ENCODE measurements at regions of chr20 and their contacts with region 1.

Region 1: GRCh38 chr20:64062596-64063388 is at the start of gene TCEA2:
- DNase-seq: peak; percentile 97
- H3K4me3 ChIP-seq: peak within 1 kb of the TSS; percentile 67 to 88
- H3K27ac ChIP-seq: peak within 1 kb of the TSS; percentile 77 to 83
- H3K4me1 ChIP-seq: peaks cover 16% of the 10 kb centered on the region
- H3K27me3 ChIP-seq: no peaks in the 10 kb centered on the region
- CTCF ChIP-seq: peak in 2 of 4 experiments; percentile 14 to 22
- POLR2A ChIP-seq: peak; percentile 81
- total RNA-seq, gene TCEA2: 45.0 to 69.5 TPM

Region 2: GRCh38 chr20:63894358-63895201 is 168.2 kb before region 1 on chr20 and contains the start of gene DNAJC5:
- intact Hi-C with region 1: loop called (anchors 10 kb)
- DNase-seq: peak; percentile 94
- H3K4me3 ChIP-seq: peak within 1 kb of the TSS; percentile 46 to 55
- H3K27ac ChIP-seq: peak within 1 kb of the TSS; percentile 77 to 82
- H3K4me1 ChIP-seq: peaks cover 17% of the 10 kb centered on the region
- H3K27me3 ChIP-seq: no peaks in the 10 kb centered on the region
- CTCF ChIP-seq: peak in 1 of 4 experiments; percentile 20
- POLR2A ChIP-seq: peak; percentile 77
- total RNA-seq, gene DNAJC5: 44.4 to 66.6 TPM

Measured in prostate gland (tissue), 2 donors.